ENCODE measurements at regions of chr20 and their contacts with region 1.

Region 1: GRCh38 chr20:20407891-20408805 is 40.2 kb downstream of the INSM1 start:
- DNase-seq: no peak
- H3K4me3 Mint-ChIP-seq: no peak overlapping the region
- H3K27ac Mint-ChIP-seq: no peak overlapping the region
- H3K4me1 Mint-ChIP-seq: peaks cover 8% of the 10 kb centered on the region
- H3K27me3 Mint-ChIP-seq: no peaks in the 10 kb centered on the region

Region 2: DNA sequence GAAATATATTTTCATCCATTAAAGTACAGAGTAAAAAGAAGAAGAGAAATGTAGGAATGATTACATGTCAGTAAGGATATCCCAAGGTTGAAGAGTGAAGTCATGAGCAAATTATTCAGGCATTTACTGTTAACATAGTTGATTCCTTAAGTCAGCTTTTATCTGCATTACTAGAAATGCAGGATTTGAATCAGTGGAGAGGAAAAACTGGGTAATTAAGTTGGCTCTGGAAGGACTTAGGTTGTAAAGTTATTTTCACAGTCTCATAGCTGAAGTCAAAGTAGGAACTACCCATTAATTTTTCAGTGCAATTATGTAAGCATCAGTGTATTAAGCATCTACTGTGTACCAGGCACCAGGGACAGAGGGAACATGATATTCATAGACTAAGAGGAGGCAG is 383.2 kb before region 1 on chr20:
- intact Hi-C with region 1: no loop called
- DNase-seq: no peak
- H3K4me3 Mint-ChIP-seq: no peak overlapping the region
- H3K27ac Mint-ChIP-seq: no peak overlapping the region
- H3K4me1 Mint-ChIP-seq: peaks cover 38% of the 10 kb centered on the region
- H3K27me3 Mint-ChIP-seq: no peaks in the 10 kb centered on the region

Region 3: GRCh38 chr20:20369250-20370093 is 38.7 kb before region 1 on chr20:
- intact Hi-C with region 1: loop called (anchors 5 kb)
- DNase-seq: no peak
- H3K4me3 Mint-ChIP-seq: peak overlapping the region; percentile 88
- H3K27ac Mint-ChIP-seq: peak overlapping the region; percentile 89
- H3K4me1 Mint-ChIP-seq: peaks cover 28% of the 10 kb centered on the region
- H3K27me3 Mint-ChIP-seq: peaks cover 60% of the 10 kb centered on the region

Region 4: GRCh38 chr20:20425823-20426654 is 17.9 kb after region 1 on chr20:
- intact Hi-C with region 1: loop called (anchors 2 kb)
- DNase-seq: no peak
- H3K4me3 Mint-ChIP-seq: no peak overlapping the region
- H3K27ac Mint-ChIP-seq: peak overlapping the region; percentile 55
- H3K4me1 Mint-ChIP-seq: peaks cover 35% of the 10 kb centered on the region
- H3K27me3 Mint-ChIP-seq: no peaks in the 10 kb centered on the region